ENCODE measurements at regions of chr1 and their contacts with region 1.

Region 1: DNA sequence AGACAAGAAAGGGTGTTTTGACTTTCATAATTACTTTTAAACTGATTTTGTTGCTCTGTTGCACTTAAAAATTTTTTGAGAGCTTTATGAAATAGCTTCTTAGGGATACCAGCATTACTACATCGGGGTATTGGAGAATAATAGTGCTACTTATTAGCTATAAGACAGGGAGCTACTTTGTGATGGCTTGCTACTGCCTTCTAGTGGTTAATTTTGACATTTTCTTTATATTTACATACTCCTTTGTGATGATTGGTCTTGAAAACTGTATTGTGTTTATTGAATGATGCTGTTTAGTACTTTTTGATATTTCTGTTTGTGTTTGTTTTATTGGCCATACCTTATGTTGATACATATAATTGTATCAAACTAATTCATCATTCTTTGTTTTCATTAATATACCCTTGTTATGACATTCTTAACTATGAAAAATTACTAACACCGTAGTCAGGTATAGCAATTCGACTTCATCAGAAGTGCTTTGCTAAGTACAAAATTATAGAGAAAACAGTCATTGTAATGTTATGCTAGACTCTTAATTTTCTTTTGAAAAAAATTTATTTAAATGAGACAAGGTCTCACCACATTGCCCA is 85.5 kb downstream of the CLIC4 start:
- DNase-seq: peak; percentile 79
- ATAC-seq: peak; percentile 76
- H3K4me3 ChIP-seq: no peak overlapping the region
- H3K27ac ChIP-seq: no peak overlapping the region
- H3K4me1 ChIP-seq: peaks cover 13% of the 10 kb centered on the region
- H3K27me3 ChIP-seq: no peaks in the 10 kb centered on the region
- CTCF ChIP-seq: peak; percentile 87
- POLR2A ChIP-seq: no peak
- RAD21 ChIP-seq: peak; percentile 81

Region 2: DNA sequence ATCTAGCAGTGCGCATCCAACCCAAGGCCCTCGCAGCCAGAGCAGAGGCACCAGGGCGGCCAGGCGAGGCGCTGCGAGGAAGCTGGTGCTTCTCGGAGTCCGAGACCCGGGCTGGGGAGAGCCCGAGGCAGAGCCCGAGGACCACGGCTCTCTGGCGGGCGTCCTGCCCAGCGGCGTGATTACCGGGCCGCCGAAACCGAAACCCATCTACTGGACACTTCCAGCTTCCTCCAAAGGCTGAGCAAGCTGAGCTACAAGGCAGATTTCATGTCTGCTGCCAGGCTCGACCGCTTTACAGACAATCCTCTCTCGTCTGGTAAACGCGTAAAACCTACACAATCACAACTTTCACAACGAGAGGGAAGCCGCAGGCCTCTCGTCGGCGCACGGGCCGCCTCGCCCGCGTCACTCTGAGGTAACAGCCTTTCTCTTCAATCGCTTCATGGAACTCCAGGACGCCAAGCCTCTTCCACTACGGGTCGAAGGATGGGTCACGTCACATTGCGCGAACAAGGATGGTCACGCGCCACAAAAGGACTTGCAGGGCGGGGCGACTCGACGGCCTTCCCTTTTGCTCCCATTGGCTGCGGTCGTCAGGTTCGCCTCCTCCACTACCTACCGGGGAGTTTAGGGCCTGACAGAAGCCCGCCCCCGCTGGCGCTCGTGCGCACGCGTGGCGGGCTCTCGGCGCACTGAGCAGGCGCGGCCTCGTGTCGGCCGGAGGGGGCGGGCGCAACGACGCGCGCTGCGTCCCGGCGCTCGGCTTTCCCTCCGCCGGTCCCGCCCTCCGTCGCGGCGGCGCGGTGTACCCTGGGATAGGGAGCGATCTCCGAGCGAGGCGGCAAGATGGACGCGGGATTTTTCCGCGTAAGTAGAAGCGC is 188.1 kb before region 1 on chr1 and contains the start of gene SRRM1:
- CTCF ChIA-PET with region 1: no interaction called
- POLR2A ChIA-PET with region 1: no interaction called
- dilution Hi-C with region 1: no loop called
- in situ Hi-C with region 1: no loop called
- intact Hi-C with region 1: loop called (anchors 5 kb)
- DNase-seq: peak; percentile 100
- ATAC-seq: peak; percentile 94
- H3K4me3 ChIP-seq: peak within 1 kb of the TSS; percentile 85
- H3K27ac ChIP-seq: peak within 1 kb of the TSS; percentile 96
- H3K4me1 ChIP-seq: peaks cover 6% of the 10 kb centered on the region
- H3K27me3 ChIP-seq: peaks cover under 1% of the 10 kb centered on the region; the same call in 1 of the 2 replicates
- CTCF ChIP-seq: peak; percentile 10; the same call in 1 of the 2 replicates
- POLR2A ChIP-seq: peak; percentile 99
- RAD21 ChIP-seq: peak; percentile 24
- total RNA-seq, gene SRRM1: 13.6 and 24.2 TPM in 2 replicates

Region 3: GRCh38 chr1:24659993-24660665 is 170.6 kb before region 1 on chr1:
- CTCF ChIA-PET with region 1: interaction called, 4 read pairs
- POLR2A ChIA-PET with region 1: interaction called, 11 read pairs
- dilution Hi-C with region 1: no loop called
- in situ Hi-C with region 1: no loop called
- intact Hi-C with region 1: no loop called
- DNase-seq: no peak
- ATAC-seq: no peak
- H3K4me3 ChIP-seq: no peak overlapping the region
- H3K27ac ChIP-seq: no peak overlapping the region
- H3K4me1 ChIP-seq: no peaks in the 10 kb centered on the region; the same call in 1 of the 2 replicates
- H3K27me3 ChIP-seq: no peaks in the 10 kb centered on the region
- CTCF ChIP-seq: no peak
- POLR2A ChIP-seq: no peak
- RAD21 ChIP-seq: no peak

Region 4: DNA sequence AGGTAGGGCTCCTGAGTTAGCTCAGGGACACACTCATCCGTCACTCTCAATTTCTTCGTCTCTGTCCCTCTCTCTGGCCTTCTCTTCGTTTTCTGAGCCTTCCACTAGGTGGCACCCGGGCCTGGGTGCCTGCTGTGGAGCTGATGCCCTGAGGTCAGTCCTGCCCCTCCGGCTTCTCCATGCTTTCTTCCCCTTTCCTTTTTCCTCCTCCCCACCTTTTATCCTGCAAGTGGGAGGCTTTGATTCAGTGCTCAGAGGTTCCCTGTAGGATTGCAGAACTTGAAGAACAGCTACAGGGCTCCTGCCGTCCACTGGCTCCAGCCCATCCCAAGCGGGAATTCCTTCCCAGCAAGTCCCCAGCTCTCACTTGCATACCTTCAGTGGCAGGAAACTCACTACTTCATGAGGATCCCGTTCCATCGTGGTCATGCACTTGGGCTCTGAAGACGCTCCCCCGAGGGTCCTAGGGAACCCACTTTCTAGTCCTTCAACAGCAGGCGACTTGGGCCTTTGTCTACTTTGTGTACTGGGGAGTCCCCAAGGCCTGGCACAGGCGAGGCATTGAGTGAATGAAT is 142.1 kb before region 1 on chr1:
- CTCF ChIA-PET with region 1: interaction called, 21 read pairs
- POLR2A ChIA-PET with region 1: interaction called, 5 read pairs
- dilution Hi-C with region 1: no loop called
- in situ Hi-C with region 1: loop called (anchors 5 kb)
- intact Hi-C with region 1: loop called (anchors 2 kb)
- DNase-seq: peak; percentile 61
- ATAC-seq: peak; percentile 88
- H3K4me3 ChIP-seq: no peak overlapping the region
- H3K27ac ChIP-seq: no peak overlapping the region
- H3K4me1 ChIP-seq: peaks cover 5% of the 10 kb centered on the region
- H3K27me3 ChIP-seq: no peaks in the 10 kb centered on the region
- CTCF ChIP-seq: peak; percentile 92
- POLR2A ChIP-seq: peak; percentile 36; the same call in 1 of the 2 replicates
- RAD21 ChIP-seq: peak; percentile 98

Region 5: DNA sequence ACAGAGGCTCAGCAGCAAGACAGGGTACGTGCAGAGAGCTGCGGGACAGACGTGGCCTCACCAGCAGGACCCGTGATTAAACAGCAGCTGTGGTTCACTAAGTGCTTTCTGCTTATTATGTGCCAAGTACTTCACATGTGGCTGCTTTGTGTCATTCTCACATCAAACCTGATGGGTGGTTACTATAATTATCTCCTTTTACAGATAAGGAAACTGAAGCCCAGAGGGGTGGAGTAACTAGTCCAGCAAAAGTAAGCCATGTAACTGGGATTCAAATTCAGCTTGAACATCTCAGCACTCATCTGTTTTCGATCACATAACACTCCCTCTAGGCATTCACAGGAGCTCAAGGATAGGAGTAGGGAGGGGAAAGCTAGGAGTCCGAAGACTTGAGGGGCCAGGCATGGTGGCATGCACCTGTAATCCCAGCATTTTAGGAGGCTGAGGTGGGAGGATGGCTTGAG is 136.4 kb before region 1 on chr1:
- CTCF ChIA-PET with region 1: interaction called, 21 read pairs
- POLR2A ChIA-PET with region 1: no interaction called
- dilution Hi-C with region 1: no loop called
- in situ Hi-C with region 1: loop called (anchors 5 kb)
- intact Hi-C with region 1: loop called (anchors 2 kb)
- DNase-seq: peak; percentile 53
- ATAC-seq: peak; percentile 63
- H3K4me3 ChIP-seq: no peak overlapping the region
- H3K27ac ChIP-seq: peak overlapping the region; percentile 2; the same call in 1 of the 2 replicates
- H3K4me1 ChIP-seq: peaks cover 9% of the 10 kb centered on the region
- H3K27me3 ChIP-seq: no peaks in the 10 kb centered on the region
- CTCF ChIP-seq: no peak
- POLR2A ChIP-seq: no peak
- RAD21 ChIP-seq: no peak

Region 6: GRCh38 chr1:24714859-24715520 is 115.8 kb before region 1 on chr1:
- CTCF ChIA-PET with region 1: no interaction called
- POLR2A ChIA-PET with region 1: no interaction called
- dilution Hi-C with region 1: no loop called
- in situ Hi-C with region 1: no loop called
- intact Hi-C with region 1: no loop called
- DNase-seq: peak; percentile 47
- ATAC-seq: no peak
- H3K4me3 ChIP-seq: no peak overlapping the region
- H3K27ac ChIP-seq: no peak overlapping the region; the same call in 1 of the 2 replicates
- H3K4me1 ChIP-seq: peaks cover 23% of the 10 kb centered on the region
- H3K27me3 ChIP-seq: no peaks in the 10 kb centered on the region
- CTCF ChIP-seq: no peak
- POLR2A ChIP-seq: no peak
- RAD21 ChIP-seq: no peak

Region 7: GRCh38 chr1:24779689-24780464 is 50.9 kb before region 1 on chr1:
- CTCF ChIA-PET with region 1: no interaction called
- POLR2A ChIA-PET with region 1: no interaction called
- dilution Hi-C with region 1: no loop called
- in situ Hi-C with region 1: no loop called
- intact Hi-C with region 1: loop called (anchors 5 kb)
- DNase-seq: no peak
- ATAC-seq: no peak
- H3K4me3 ChIP-seq: no peak overlapping the region
- H3K27ac ChIP-seq: no peak overlapping the region
- H3K4me1 ChIP-seq: peaks cover 4% of the 10 kb centered on the region; the same call in 1 of the 2 replicates
- H3K27me3 ChIP-seq: no peaks in the 10 kb centered on the region
- CTCF ChIP-seq: no peak; the same call in 1 of the 2 replicates
- POLR2A ChIP-seq: no peak
- RAD21 ChIP-seq: 0 out of 2 replicates have a peak, but pooled peaks have one; percentile 5

Measured in IMR-90 (cell line).